Naive thymus-derived CD4-positive, alpha-beta T cell (primary cell): ENCODE measurements at regions of chr1 and their contacts with region 1.

Region 1: DNA sequence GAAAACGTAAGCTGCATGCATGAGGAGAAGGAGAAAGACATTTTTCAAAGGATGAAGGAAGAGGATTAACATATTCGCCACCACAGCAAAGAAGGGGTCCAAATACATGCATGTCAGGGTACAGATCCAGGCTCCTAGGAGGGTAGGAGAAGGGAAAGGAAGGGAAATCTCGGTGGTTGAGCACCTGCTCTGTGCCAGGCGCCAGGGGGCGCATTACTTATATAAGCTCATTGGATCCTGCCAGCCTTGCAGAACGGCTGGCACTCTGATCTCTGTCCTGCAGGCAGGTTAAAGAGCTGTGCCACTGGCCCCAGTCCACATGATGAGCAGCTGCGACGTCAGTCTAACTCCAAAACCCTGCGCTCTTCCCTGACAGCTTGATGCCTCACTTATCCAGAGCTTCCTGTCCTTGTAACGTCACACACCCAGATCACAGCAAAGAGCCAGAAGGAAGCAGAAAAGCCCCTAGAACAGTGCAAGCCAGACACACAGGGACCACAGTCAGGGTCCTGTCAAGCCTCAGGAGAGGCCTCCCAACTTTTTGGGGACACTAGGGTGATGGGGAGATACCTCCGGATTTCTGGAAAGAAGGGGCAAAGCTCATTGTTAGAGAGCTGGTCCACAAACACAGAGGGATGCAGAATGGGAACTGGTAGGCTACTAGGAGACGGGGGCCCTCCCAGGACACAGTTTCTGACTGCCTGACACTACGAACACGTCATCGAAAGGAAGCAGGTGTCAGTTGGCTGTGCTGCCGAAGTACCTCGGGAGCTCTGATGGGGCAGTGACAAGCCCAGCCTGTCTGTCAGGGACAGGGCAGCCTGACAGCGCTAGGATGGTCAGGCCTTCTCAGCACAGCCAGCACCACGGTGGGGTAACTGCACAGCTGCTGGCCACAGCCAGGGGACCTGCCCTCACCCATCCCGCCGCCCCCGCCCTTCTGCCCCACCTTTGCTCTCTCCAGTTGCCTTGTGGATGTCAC is 99.1 kb downstream of the BEND5 start:
- DNase-seq: peak in 7 of 9 donors; percentile 7 to 44 (median 12)
- ATAC-seq: peak; percentile 44
- H3K4me3 ChIP-seq: no peak overlapping the region
- H3K4me3 Mint-ChIP-seq: no peak overlapping the region
- H3K27ac ChIP-seq: no peak overlapping the region
- H3K27ac Mint-ChIP-seq: no peak overlapping the region
- H3K4me1 ChIP-seq: no peaks in the 10 kb centered on the region
- H3K4me1 Mint-ChIP-seq: peaks cover 0 to 6% (median 0%) of the 10 kb centered on the region in 7 donors
- H3K27me3 ChIP-seq: no peaks in the 10 kb centered on the region
- H3K27me3 Mint-ChIP-seq: peaks cover 5 to 30% (median 12%) of the 10 kb centered on the region in 5 donors

Region 2: GRCh38 chr1:48697066-48697707 is 19.6 kb after region 1 on chr1:
- CTCF ChIA-PET with region 1: interaction called, 6 read pairs
- POLR2A ChIA-PET with region 1: no interaction called
- intact Hi-C with region 1: loop called in 1 of 2 experiments (anchors 2 kb)
- DNase-seq: peak in 6 of 9 donors; percentile 25 to 57 (median 28)
- ATAC-seq: no peak
- H3K4me3 ChIP-seq: no peak overlapping the region
- H3K4me3 Mint-ChIP-seq: no peak overlapping the region
- H3K27ac ChIP-seq: no peak overlapping the region
- H3K27ac Mint-ChIP-seq: no peak overlapping the region
- H3K4me1 ChIP-seq: no peaks in the 10 kb centered on the region
- H3K4me1 Mint-ChIP-seq: peaks cover 0 to 5% (median 0%) of the 10 kb centered on the region in 7 donors
- H3K27me3 ChIP-seq: no peaks in the 10 kb centered on the region
- H3K27me3 Mint-ChIP-seq: peaks cover 16 to 31% (median 25%) of the 10 kb centered on the region in 5 donors

Region 3: DNA sequence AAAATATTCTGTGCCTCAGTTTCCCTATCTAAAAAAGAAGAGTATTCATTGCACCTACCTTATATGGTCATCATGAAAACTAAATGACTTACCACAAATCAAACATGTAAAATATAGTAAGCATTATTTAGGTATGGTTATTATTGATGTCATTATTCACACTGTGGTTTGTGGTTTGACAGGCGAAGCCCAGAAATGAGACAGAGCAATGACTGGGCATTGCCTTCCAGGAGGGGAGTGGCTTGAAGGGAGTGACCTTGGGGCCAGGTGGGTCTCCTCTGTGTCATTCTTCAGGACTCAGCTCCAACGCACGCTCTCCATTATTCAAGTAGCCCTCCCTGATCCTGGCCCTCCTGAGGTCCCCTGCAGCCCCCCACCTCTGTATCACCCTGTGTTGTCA is 1611.9 kb after region 1 on chr1:
- CTCF ChIA-PET with region 1: no interaction called
- POLR2A ChIA-PET with region 1: no interaction called
- intact Hi-C with region 1: no loop called
- DNase-seq: no peak
- ATAC-seq: no peak
- H3K4me3 ChIP-seq: no peak overlapping the region
- H3K4me3 Mint-ChIP-seq: no peak overlapping the region
- H3K27ac ChIP-seq: no peak overlapping the region
- H3K27ac Mint-ChIP-seq: no peak overlapping the region
- H3K4me1 ChIP-seq: no peaks in the 10 kb centered on the region
- H3K4me1 Mint-ChIP-seq: no peaks in the 10 kb centered on the region
- H3K27me3 ChIP-seq: peaks cover 0 to 8% of the 10 kb centered on the region in 2 donors
- H3K27me3 Mint-ChIP-seq: peaks cover 0 to 25% (median 16%) of the 10 kb centered on the region in 5 donors

Region 4: GRCh38 chr1:50348449-50349241 is 1671.0 kb after region 1 on chr1:
- CTCF ChIA-PET with region 1: no interaction called
- POLR2A ChIA-PET with region 1: no interaction called
- intact Hi-C with region 1: loop called in 1 of 2 experiments (anchors 5 kb)
- DNase-seq: peak in 7 of 9 donors; percentile 17 to 48 (median 30)
- ATAC-seq: peak; percentile 73
- H3K4me3 ChIP-seq: no peak overlapping the region
- H3K4me3 Mint-ChIP-seq: no peak overlapping the region
- H3K27ac ChIP-seq: no peak overlapping the region
- H3K27ac Mint-ChIP-seq: no peak overlapping the region
- H3K4me1 ChIP-seq: no peaks in the 10 kb centered on the region
- H3K4me1 Mint-ChIP-seq: peaks cover 0 to 3% (median 0%) of the 10 kb centered on the region in 7 donors
- H3K27me3 ChIP-seq: no peaks in the 10 kb centered on the region
- H3K27me3 Mint-ChIP-seq: peaks cover 0 to 42% (median 31%) of the 10 kb centered on the region in 5 donors